Ovary (tissue), 10 donors: ENCODE measurements at regions of chr14 and their contacts with region 1.

Region 1: DNA sequence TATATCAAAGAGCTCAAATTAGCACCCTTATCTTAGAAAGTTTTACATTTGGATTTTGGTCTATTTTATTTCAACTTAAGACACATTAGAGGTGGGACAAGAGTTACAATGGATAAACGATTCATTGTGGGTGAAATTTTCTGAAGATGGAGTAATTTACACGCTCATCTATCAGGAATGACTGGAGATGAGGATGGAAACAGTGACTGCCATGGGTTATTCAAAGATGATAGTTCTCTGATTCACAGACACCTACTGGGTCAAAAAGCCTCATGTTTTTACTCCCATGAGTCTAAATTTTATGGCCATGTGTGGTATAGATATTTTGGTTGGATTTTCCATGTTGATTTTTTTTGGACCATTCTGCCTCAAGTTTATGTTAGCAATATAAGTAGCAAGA is 22.1 kb downstream of the SAMD4A start:
- DNase-seq: no peak
- H3K4me3 ChIP-seq: no peak overlapping the region
- H3K27ac ChIP-seq: no peak overlapping the region
- H3K4me1 ChIP-seq: no peaks in the 10 kb centered on the region
- H3K27me3 ChIP-seq: no peaks in the 10 kb centered on the region
- CTCF ChIP-seq: no peak
- EP300 ChIP-seq: no peak
- POLR2A ChIP-seq: no peak

Region 2: GRCh38 chr14:54312140-54312801 is 276.8 kb before region 1 on chr14:
- intact Hi-C with region 1: no loop called
- DNase-seq: no peak
- H3K4me3 ChIP-seq: no peak overlapping the region
- H3K27ac ChIP-seq: no peak overlapping the region
- H3K4me1 ChIP-seq: no peaks in the 10 kb centered on the region
- H3K27me3 ChIP-seq: no peaks in the 10 kb centered on the region
- CTCF ChIP-seq: no peak
- EP300 ChIP-seq: no peak
- POLR2A ChIP-seq: no peak

Region 3: GRCh38 chr14:55373784-55374705 is 785.0 kb after region 1 on chr14:
- intact Hi-C with region 1: loop called in 1 of 4 experiments (anchors 5 kb)
- DNase-seq: no peak
- H3K4me3 ChIP-seq: no peak overlapping the region
- H3K27ac ChIP-seq: no peak overlapping the region
- H3K4me1 ChIP-seq: no peaks in the 10 kb centered on the region
- H3K27me3 ChIP-seq: no peaks in the 10 kb centered on the region
- CTCF ChIP-seq: no peak
- EP300 ChIP-seq: no peak
- POLR2A ChIP-seq: no peak